BJ (cell line): ENCODE measurements at regions of chr5 and their contacts with region 1.

Region 1: GRCh38 chr5:54959673-54960418 is 25.5 kb downstream of the ESM1 start:
- DNase-seq: no peak
- H3K4me3 ChIP-seq: no peak overlapping the region
- H3K27me3 ChIP-seq: no peaks in the 10 kb centered on the region
- CTCF ChIP-seq: peak; percentile 27; the same call in 1 of the 2 replicates

Region 2: GRCh38 chr5:54580997-54581811 is 378.6 kb before region 1 on chr5:
- CTCF ChIA-PET with region 1: no interaction called
- POLR2A ChIA-PET with region 1: no interaction called
- DNase-seq: peak; percentile 37
- H3K4me3 ChIP-seq: no peak overlapping the region
- H3K27me3 ChIP-seq: no peaks in the 10 kb centered on the region; the same call in 1 of the 2 replicates
- CTCF ChIP-seq: no peak

Region 3: DNA sequence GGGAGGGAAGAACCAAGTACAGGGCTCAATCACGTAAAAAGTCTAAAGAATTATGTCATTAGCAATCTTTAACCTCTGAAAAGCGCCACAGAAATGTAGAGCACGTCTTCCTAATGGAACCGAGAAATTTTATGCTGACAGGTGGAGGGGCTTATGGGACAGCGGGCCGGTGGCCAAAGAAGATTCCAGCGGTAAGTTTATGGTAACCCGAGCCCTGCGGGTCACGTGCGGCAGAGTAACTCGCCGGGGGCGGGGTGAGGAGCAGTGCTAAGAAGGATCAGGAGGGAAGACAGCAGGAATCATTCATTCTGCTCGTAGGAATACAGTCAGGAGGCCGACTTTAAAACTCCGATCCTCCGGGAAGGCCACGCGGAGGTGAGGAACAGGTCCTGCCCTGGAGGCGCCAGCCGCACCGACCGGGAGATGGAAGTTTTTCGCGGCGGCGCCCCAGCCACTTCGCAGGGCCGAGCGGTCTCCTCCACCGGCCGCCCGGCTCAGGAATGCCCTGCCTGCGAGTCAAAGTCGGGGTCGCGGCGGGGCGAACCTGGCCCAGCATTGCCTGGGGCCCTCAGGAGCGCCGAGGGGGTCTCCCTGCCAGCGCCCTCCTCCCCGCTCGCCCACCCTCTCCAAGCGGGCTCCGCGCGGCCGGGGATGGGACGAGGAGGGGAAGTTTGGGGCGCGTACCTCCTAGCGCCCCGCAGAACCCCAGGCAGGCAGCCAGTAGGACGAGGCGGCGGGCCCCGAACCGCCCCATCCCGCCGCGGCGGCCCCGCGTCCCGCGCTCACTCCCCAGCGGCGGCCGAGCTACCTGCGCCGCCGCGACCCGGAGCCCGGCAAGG is 76.3 kb before region 1 on chr5:
- CTCF ChIA-PET with region 1: no interaction called
- POLR2A ChIA-PET with region 1: no interaction called
- DNase-seq: no peak
- H3K4me3 ChIP-seq: peak overlapping the region; percentile 49
- H3K27me3 ChIP-seq: peaks cover 2% of the 10 kb centered on the region
- CTCF ChIP-seq: no peak

Region 4: GRCh38 chr5:55146543-55147151 is 186.8 kb after region 1 on chr5:
- CTCF ChIA-PET with region 1: interaction called, 11 read pairs
- POLR2A ChIA-PET with region 1: no interaction called
- DNase-seq: peak; percentile 35
- H3K4me3 ChIP-seq: no peak overlapping the region
- H3K27me3 ChIP-seq: no peaks in the 10 kb centered on the region
- CTCF ChIP-seq: peak; percentile 91